Activated T-helper 2 cell treated with anti-CD3 and anti-CD28 coated beads, Interferon-gamma antibody, Interleukin-2, Interleukin-4, amounts not matched to agents 10 μg/mL and 5 μg/mL and 100 μg/mL, durations not matched to agents 14 hours and 24 hours and 36 hours (primary cell): ENCODE measurements at regions of chr19 and their contacts with region 1.

Region 1: GRCh38 chr19:18496167-18496979 is 25.5 kb downstream of the ELL start:
- DNase-seq: peak; percentile 46
- H3K4me3 Mint-ChIP-seq: peak overlapping the region; percentile 35
- H3K27ac Mint-ChIP-seq: peak overlapping the region; percentile 86
- H3K4me1 Mint-ChIP-seq: peaks cover 51% of the 10 kb centered on the region
- H3K27me3 Mint-ChIP-seq: no peaks in the 10 kb centered on the region

Region 2: DNA sequence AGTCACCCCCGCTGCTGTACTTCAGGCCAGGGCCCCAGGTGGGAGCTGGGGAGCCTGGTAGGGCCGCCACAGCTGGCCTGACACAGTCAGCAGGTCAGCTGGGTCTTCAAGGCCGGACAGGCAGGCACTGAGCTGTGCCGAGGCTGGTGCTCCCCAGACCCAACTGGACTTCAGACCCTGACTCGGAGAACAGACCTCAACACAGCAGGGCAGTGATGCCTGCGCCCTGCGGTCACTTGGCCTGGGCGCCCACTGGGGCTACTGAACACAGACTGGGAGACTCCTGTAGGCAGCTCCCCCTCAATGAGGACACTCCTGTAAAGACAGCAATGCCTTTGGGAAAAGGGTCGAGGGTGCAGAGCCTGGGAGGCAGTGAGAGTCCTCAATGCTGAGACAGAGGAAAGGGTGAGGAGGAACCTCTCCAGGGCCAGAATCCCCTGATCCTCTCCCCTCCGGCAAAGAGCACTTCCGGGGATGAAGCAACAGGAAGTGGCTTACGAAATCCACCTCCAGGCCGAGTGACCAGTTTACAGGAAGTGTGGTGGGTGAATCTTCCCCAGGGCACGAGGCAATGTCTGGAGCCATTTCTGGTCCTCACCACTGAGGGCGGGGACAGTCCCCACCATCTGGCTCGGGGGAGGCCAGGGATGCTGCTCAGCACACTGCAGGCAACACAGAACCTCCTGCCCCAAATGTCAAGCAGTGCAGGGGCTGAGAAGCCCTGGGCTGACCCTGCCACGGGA is 17.6 kb before region 1 on chr19:
- intact Hi-C with region 1: loop called (anchors 1 kb)
- DNase-seq: peak; percentile 46
- H3K4me3 Mint-ChIP-seq: peak overlapping the region; percentile 69
- H3K27ac Mint-ChIP-seq: peak overlapping the region; percentile 94
- H3K4me1 Mint-ChIP-seq: peaks cover 74% of the 10 kb centered on the region
- H3K27me3 Mint-ChIP-seq: no peaks in the 10 kb centered on the region